WTC11 (cell line): ENCODE measurements at regions of chr2 and their contacts with region 1.

Region 1: GRCh38 chr2:219726916-219727315 is 99.5 kb downstream of the SLC4A3 start:
- DNase-seq: no peak
- ATAC-seq: peak; percentile 86
- H3K4me3 Mint-ChIP-seq: no peak overlapping the region
- H3K27ac Mint-ChIP-seq: no peak overlapping the region
- H3K4me1 Mint-ChIP-seq: peaks cover 19% of the 10 kb centered on the region
- H3K27me3 Mint-ChIP-seq: no peaks in the 10 kb centered on the region
- CTCF ChIP-seq: no peak

Region 2: GRCh38 chr2:219619235-219619634 is 107.7 kb before region 1 on chr2:
- CTCF ChIA-PET with region 1: interaction called, 18 read pairs
- POLR2A ChIA-PET with region 1: no interaction called
- DNase-seq: no peak
- ATAC-seq: peak; percentile 79
- H3K4me3 Mint-ChIP-seq: no peak overlapping the region
- H3K27ac Mint-ChIP-seq: no peak overlapping the region
- H3K4me1 Mint-ChIP-seq: no peaks in the 10 kb centered on the region
- H3K27me3 Mint-ChIP-seq: peaks cover 2% of the 10 kb centered on the region
- CTCF ChIP-seq: no peak